A549 (cell line): ENCODE measurements at regions of chr2 and their contacts with region 1.

Region 1: DNA sequence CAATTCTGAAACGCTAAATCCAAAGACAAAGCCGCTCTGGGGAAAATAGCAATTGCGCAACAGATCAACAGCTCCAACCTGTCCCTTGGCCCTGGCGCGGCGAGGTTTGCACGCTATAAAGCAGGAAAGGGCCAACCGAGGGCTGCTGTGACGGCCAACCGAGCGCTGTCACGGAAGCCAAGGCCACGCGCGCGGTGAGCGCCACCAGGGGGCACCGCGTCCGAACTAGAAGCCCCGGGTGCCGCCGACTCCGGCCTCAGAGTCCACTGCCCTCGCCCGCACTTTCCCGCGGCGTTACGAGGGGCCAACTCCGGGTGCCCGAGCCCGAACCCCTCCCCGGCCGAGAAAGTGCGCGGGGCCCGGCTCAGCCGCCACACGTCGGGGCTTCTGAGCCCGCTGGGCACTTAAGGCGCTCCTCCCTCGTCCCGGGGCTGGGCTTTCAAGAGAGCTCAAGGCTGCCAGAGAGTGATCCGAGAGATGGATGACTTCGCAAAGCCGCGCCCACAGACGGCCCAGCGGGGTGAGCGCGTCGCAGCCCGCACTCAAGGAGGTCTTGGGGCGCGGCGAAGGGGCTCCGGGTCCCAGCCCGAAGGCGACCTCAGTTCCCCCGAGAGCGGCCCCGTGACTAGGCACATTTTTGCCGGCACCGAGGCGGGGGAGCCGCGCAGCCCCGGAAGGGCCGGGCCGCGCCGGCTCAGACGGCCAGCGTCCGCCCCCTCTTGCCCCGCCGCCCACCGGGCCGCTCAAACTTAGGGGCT is 897 bp downstream of the NFE2L2 start:
- DNase-seq: peak; percentile 69 to 99
- ATAC-seq: peak; percentile 65 to 72
- H3K4me3 ChIP-seq: peak overlapping the region; percentile 92
- H3K27ac ChIP-seq: peak overlapping the region; percentile 99 to 100
- H3K4me1 ChIP-seq: peaks cover 39% of the 10 kb centered on the region
- CTCF ChIP-seq: peak; percentile 80
- EP300 ChIP-seq: peak; percentile 72 to 85; a peak in 3 of 5 replicates
- POLR2A ChIP-seq: peak; percentile 24
- RAD21 ChIP-seq: peak; percentile 63 to 85

Region 2: DNA sequence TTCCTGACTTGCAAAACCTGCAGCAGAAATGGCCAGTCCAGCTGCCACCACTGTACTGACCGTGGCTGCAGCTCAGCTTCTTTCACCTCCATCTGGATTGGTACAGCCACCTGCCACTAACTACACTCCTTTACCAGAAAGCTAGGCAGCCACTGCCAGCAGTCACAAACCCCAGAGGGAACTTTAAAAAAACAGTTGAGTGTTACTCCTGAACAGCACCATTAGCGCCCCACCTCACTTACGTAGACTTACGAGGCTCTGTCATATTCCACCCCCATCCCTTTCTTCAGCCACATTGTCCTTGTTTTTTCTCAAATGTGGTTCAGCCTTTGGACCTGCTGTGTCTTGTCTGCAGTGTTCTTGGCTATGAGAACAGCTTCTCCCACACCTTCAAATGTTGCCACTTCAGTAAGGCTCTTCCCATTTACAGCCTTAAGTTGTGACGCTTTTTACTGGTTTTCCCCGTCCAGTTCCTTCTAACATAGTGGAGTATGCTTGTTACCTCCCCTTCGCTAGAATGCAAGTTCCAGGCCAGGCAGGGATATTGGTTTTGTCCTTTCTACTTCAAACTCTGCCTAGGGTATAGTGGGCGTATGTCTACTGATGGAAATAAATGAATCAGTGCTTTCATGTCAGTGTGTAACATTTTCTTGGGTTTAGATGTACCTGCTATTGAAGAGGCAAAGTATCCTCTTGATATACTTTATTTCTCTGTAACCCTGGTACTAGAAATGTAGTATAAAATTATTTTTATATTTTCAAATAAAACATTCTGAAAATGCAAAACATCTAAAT is 34.0 kb before region 1 on chr2:
- CTCF ChIA-PET with region 1: interaction called, 8 read pairs
- POLR2A ChIA-PET with region 1: interaction called, 24 read pairs
- DNase-seq: no peak
- ATAC-seq: peak; percentile 14 to 62
- H3K4me3 ChIP-seq: no peak overlapping the region
- H3K27ac ChIP-seq: peak overlapping the region in 1 of 2 experiments; percentile 22; a peak in 1 of 6 replicates
- H3K4me1 ChIP-seq: peaks cover 63% of the 10 kb centered on the region; the same call in 2 of the 3 replicates
- CTCF ChIP-seq: no peak
- EP300 ChIP-seq: no peak
- POLR2A ChIP-seq: no peak
- RAD21 ChIP-seq: no peak

Region 3: GRCh38 chr2:177275041-177276020 is 11.7 kb after region 1 on chr2:
- CTCF ChIA-PET with region 1: interaction called, 32 read pairs
- POLR2A ChIA-PET with region 1: interaction called, 16 read pairs
- DNase-seq: peak in 1 of 2 experiments; percentile 76
- ATAC-seq: peak; percentile 60 to 67; a peak in 4 of 6 replicates
- H3K4me3 ChIP-seq: peak overlapping the region; percentile 27; the same call in 2 of the 3 replicates
- H3K27ac ChIP-seq: peak overlapping the region; percentile 73 to 76
- H3K4me1 ChIP-seq: peaks cover 59% of the 10 kb centered on the region
- CTCF ChIP-seq: no peak
- EP300 ChIP-seq: peak; percentile 53 to 64; a peak in 3 of 5 replicates
- POLR2A ChIP-seq: no peak
- RAD21 ChIP-seq: peak in 1 of 2 experiments; percentile 21; a peak in 1 of 5 replicates

Region 4: GRCh38 chr2:177296040-177296439 is 32.4 kb after region 1 on chr2:
- CTCF ChIA-PET with region 1: interaction called, 39 read pairs
- POLR2A ChIA-PET with region 1: interaction called, 3 read pairs
- DNase-seq: peak; percentile 22 to 32
- ATAC-seq: peak; percentile 43 to 71; a peak in 4 of 6 replicates
- H3K4me3 ChIP-seq: no peak overlapping the region
- H3K27ac ChIP-seq: peak overlapping the region in 1 of 2 experiments; percentile 39; a peak in 2 of 6 replicates
- H3K4me1 ChIP-seq: peaks cover 8% of the 10 kb centered on the region
- CTCF ChIP-seq: peak; percentile 66
- EP300 ChIP-seq: no peak
- POLR2A ChIP-seq: no peak
- RAD21 ChIP-seq: peak; percentile 61 to 74

Region 5: GRCh38 chr2:177419274-177419673 is 155.6 kb after region 1 on chr2:
- CTCF ChIA-PET with region 1: interaction called, 20 read pairs
- POLR2A ChIA-PET with region 1: no interaction called
- DNase-seq: no peak
- ATAC-seq: no peak
- H3K4me3 ChIP-seq: no peak overlapping the region
- H3K27ac ChIP-seq: peak overlapping the region; percentile 35 to 63; a peak in 4 of 6 replicates
- H3K4me1 ChIP-seq: peaks cover 62% of the 10 kb centered on the region
- CTCF ChIP-seq: no peak
- EP300 ChIP-seq: no peak
- POLR2A ChIP-seq: no peak
- RAD21 ChIP-seq: no peak